CD14-positive monocyte (primary cell): ENCODE measurements at regions of chr1 and their contacts with region 1.

Region 1: DNA sequence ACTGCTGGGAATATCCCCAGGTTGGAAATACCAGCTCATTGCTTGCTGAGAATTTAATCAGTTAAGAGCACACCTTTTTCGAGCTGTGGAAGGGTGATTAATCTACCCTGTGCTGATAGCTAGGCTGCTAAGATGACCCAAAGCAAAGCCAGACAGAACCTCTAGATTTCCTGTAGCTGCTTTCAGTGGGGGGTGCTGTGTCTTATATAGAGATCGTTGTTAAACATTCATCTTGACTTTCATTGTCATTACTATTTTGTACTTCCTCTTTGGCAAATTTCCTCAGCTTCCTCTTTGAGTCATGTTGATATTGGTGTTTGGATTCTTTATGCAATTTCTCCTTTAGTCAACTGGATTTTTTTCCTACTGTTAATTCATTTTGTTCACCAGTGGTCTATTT is 155.3 kb downstream of the DISC1 start:
- DNase-seq: peak; percentile 73 to 93 (median 85)
- H3K4me3 ChIP-seq: peak overlapping the region; percentile 22 to 70 (median 50)
- H3K4me3 Mint-ChIP-seq: peak overlapping the region; percentile 31 to 81
- H3K27ac ChIP-seq: peak overlapping the region; percentile 56 to 94
- H3K27ac Mint-ChIP-seq: peak overlapping the region; percentile 91 to 97 (median 96)
- H3K4me1 ChIP-seq: peaks cover 64 to 93% of the 10 kb centered on the region in 2 donors
- H3K4me1 Mint-ChIP-seq: peaks cover 77% of the 10 kb centered on the region
- H3K27me3 ChIP-seq: no peaks in the 10 kb centered on the region
- H3K27me3 Mint-ChIP-seq: no peaks in the 10 kb centered on the region
- CTCF ChIP-seq: no peak

Region 2: GRCh38 chr1:231663211-231663792 is 118.6 kb before region 1 on chr1:
- intact Hi-C with region 1: loop called in 1 of 2 experiments (anchors 10 kb)
- DNase-seq: peak; percentile 84 to 94 (median 89)
- H3K4me3 ChIP-seq: peak overlapping the region in 2 of 3 experiments; percentile 4 to 9
- H3K4me3 Mint-ChIP-seq: peak overlapping the region in 1 of 2 donors; percentile 68
- H3K27ac ChIP-seq: peak overlapping the region in 1 of 2 donors; percentile 75
- H3K27ac Mint-ChIP-seq: peak overlapping the region; percentile 76 to 90 (median 88)
- H3K4me1 ChIP-seq: peaks cover 52 to 65% of the 10 kb centered on the region in 2 donors
- H3K4me1 Mint-ChIP-seq: peaks cover 84% of the 10 kb centered on the region
- H3K27me3 ChIP-seq: no peaks in the 10 kb centered on the region
- H3K27me3 Mint-ChIP-seq: peaks cover 0 to 2% (median 0%) of the 10 kb centered on the region in 3 donors
- CTCF ChIP-seq: no peak

Region 3: GRCh38 chr1:231958448-231958847 is 176.6 kb after region 1 on chr1:
- intact Hi-C with region 1: no loop called
- DNase-seq: no peak
- H3K4me3 ChIP-seq: no peak overlapping the region
- H3K4me3 Mint-ChIP-seq: no peak overlapping the region
- H3K27ac ChIP-seq: no peak overlapping the region
- H3K27ac Mint-ChIP-seq: peak overlapping the region in 1 of 7 donors; percentile 21
- H3K4me1 ChIP-seq: peaks cover 2 to 4% of the 10 kb centered on the region in 2 donors
- H3K4me1 Mint-ChIP-seq: peaks cover 7% of the 10 kb centered on the region
- H3K27me3 ChIP-seq: no peaks in the 10 kb centered on the region
- H3K27me3 Mint-ChIP-seq: no peaks in the 10 kb centered on the region
- CTCF ChIP-seq: no peak